ENCODE measurements at regions of chr2 and their contacts with region 1.

Region 1: DNA sequence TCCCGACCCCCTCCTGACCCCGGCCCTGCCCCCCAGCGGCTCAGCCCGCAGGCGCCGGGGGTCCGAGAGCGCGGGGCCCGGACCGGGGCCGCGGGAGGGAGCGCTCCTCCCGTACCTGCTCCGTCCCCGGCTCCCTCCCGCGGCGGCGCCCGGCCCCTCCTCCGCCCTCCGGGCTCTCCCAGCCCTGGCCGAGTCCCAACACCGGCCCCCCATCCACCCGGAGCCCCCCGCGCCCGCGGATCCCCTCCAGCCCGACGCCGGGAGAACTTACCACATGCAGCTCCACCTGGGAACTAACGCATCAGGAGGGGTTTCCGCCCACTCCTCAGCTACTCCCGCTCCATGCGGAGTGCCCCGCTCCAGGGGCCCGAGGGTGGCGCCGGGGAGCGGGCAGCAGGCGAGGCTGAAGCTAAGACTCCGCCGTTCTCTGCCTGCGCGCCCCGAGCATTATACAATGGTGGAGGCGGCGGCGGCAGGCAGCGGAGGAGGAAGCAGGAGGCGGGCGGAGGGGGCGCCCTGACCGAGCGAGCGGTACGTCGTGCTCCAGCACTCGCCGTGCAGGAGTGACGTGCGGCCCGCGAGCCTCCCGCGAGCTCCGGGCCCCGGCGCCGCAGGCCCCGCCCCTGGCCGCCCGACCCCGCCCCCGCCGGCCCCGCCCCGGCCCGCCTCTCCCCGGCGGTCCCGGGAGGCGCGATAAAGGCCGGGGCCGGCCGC is at the start of gene SERTAD2:
- DNase-seq: peak; percentile 56
- H3K4me3 ChIP-seq: peak within 1 kb of the TSS; percentile 77
- H3K27ac ChIP-seq: peak within 1 kb of the TSS; percentile 94
- H3K27me3 ChIP-seq: no peaks in the 10 kb centered on the region
- CTCF ChIP-seq: peak; percentile 21
- polyA plus RNA-seq, gene SERTAD2: 9.9 and 10.1 TPM in 2 replicates

Region 2: DNA sequence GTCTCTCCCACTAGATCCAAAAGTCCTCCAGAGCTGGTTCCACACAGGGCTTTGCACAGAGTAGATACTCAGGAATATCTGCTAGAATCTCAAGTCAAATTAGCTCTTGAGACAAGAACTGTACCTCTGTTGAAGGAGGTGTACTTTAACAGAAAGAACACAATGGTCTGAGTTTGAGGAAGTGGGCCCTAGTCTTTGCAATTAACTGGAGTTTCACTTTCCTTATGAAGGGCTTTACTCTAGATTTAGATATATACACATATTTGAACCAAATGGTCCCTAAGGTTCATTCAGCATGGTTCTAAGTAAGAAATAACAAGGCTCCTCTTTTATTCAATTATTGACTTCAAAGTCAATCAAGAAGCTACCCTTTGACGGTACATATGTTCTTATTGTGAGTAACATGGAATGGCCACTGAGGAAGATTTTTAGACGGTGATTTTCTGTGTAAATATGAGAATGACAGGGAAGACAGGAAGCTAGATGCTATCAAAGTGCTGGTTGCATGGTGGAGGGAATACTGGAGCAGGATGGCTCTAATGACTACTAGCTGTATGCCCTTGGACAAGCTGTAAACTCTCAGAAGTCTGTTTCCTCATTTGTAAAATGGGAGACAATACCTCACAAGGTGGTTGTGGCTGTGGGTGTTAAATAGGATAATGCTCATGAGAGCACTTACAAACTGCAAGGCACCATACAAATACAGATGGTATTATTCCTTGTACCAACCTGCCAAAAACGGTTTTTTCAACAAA is 73.7 kb after region 1 on chr2:
- CTCF ChIA-PET with region 1: interaction called, 4 read pairs
- POLR2A ChIA-PET with region 1: interaction called, 13 read pairs
- DNase-seq: no peak
- H3K4me3 ChIP-seq: no peak overlapping the region
- H3K27ac ChIP-seq: no peak overlapping the region
- H3K27me3 ChIP-seq: no peaks in the 10 kb centered on the region
- CTCF ChIP-seq: no peak

Region 3: DNA sequence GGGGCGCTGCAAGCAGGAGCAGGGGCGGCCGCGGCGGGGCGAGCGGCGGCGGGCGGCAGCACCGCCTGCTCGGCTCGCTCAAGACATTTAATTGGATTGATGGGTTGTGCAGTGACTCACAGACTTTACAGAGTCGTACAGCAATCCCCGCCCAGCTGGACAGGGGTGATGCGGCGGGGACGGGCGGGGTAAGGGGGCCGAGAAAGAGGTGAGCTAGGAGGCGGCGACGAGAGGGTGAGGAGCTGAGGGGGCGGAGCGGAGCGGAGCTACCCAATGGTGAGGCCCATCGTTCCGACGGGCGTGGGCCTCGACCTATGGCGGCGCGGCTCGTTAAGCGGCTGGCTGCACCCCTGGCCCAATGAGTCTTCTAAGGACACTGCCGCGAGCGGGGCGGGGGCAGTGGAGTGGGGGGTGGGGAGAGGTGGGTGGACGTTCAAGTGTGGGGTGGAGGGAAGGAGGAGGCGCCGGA is 97.3 kb after region 1 on chr2:
- CTCF ChIA-PET with region 1: interaction called, 15 read pairs
- POLR2A ChIA-PET with region 1: interaction called, 106 read pairs
- DNase-seq: peak; percentile 100
- H3K4me3 ChIP-seq: peak overlapping the region; percentile 85
- H3K27ac ChIP-seq: peak overlapping the region; percentile 60
- H3K27me3 ChIP-seq: no peaks in the 10 kb centered on the region
- CTCF ChIP-seq: no peak

Region 4: DNA sequence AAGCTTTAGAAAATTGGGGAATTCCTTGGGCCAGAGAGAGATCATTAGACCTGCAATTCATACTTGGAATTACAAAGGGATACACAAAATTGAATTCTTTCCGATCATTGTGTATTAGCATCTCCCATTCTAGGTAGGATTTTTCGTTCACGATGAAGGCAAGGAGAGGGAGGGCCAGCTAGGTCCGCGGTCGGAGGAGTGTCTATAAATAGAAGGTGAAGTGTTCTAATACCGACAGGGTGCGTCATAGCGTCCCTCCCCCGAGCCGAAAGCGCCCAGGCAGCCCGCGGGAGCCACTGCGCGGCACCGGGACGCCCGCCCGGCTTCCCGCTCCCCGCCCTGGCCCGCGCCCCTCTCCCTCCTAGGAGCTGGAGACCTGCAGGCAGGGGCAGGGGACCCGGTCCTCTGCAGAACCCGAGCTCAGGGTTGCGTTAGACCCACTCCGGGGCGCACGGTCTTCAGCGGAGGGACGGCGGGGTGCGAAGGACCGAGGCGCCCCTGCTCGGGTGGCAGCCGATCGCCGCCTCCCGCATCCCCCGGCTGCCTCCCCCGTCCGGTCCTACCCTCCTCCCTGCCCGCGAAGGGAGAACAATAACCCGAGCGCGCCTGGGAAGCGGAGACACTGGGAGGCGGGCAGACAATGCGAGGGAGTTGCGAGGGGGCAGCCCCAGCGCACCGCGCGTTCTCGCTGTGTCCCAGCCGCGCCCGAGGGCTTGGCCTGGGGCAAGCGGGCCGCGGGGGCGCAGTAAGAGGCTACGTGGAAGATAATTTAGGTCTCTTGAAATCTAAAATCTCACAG is 114.4 kb after region 1 on chr2:
- CTCF ChIA-PET with region 1: interaction called, 3 read pairs
- POLR2A ChIA-PET with region 1: interaction called, 23 read pairs
- DNase-seq: peak; percentile 61
- H3K4me3 ChIP-seq: peak overlapping the region; percentile 58
- H3K27ac ChIP-seq: peak overlapping the region; percentile 88
- H3K27me3 ChIP-seq: no peaks in the 10 kb centered on the region
- CTCF ChIP-seq: no peak

Region 5: GRCh38 chr2:64786343-64787015 is 133.0 kb after region 1 on chr2:
- CTCF ChIA-PET with region 1: no interaction called
- POLR2A ChIA-PET with region 1: interaction called, 10 read pairs
- DNase-seq: no peak
- H3K4me3 ChIP-seq: no peak overlapping the region
- H3K27ac ChIP-seq: no peak overlapping the region
- H3K27me3 ChIP-seq: no peaks in the 10 kb centered on the region
- CTCF ChIP-seq: no peak

Region 6: GRCh38 chr2:64859312-64860212 is 206.1 kb after region 1 on chr2:
- CTCF ChIA-PET with region 1: interaction called, 11 read pairs
- POLR2A ChIA-PET with region 1: interaction called, 22 read pairs
- DNase-seq: peak; percentile 78
- H3K4me3 ChIP-seq: peak overlapping the region; percentile 44
- H3K27ac ChIP-seq: peak overlapping the region; percentile 92
- H3K27me3 ChIP-seq: peaks cover 5% of the 10 kb centered on the region
- CTCF ChIP-seq: no peak

Region 7: GRCh38 chr2:64865073-64865830 is 211.7 kb after region 1 on chr2:
- CTCF ChIA-PET with region 1: interaction called, 44 read pairs
- POLR2A ChIA-PET with region 1: interaction called, 22 read pairs
- DNase-seq: no peak
- H3K4me3 ChIP-seq: peak overlapping the region; percentile 57
- H3K27ac ChIP-seq: no peak overlapping the region
- H3K27me3 ChIP-seq: peaks cover 38% of the 10 kb centered on the region
- CTCF ChIP-seq: peak; percentile 53

Measured in AG04450 (cell line).